ENCODE measurements at regions of chr11 and their contacts with region 1.

Region 1: DNA sequence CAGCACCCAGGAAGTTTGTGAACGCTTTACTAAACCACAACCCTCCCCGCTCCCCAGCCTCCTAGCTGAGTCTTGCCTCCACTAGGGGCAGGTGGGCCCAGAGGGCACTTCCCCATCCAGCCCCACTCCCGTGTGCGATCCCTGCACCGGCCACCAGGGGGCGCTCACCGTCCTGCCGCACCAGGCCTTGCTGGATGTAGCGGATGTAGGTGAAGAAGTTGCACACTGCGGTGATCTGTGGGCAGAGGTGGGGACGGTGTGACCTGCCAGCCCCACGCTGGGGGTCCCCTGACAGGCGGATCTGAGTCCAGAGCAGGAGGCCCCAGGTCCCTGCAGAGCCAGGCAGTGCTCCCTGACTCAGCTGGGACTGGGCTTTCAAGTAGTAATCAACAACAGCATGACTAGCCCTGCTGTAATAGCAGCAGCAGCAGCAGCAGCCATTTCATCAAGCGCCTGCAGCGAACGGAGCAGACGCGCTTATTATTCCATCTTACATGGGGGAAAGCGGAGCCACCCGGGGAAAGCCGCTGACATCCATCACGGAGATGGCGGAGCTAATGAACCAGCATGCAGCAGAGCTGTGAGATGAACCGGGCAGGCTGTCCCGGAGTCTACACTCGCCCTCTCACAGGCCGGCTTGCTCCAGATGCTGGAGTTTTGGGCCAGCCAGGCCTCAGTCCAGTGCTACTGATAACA is 7.9 kb upstream of the FADS3 start:
- DNase-seq: peak; percentile 82 to 97 (median 91)
- ATAC-seq: peak; percentile 89 to 92 (median 92)
- H3K4me3 ChIP-seq: no peak overlapping the region
- H3K4me3 Mint-ChIP-seq: no peak overlapping the region
- H3K27ac ChIP-seq: no peak overlapping the region
- H3K27ac Mint-ChIP-seq: peak overlapping the region; percentile 44 to 63
- H3K4me1 ChIP-seq: peaks cover 0 to 12% of the 10 kb centered on the region in 2 experiments
- H3K4me1 Mint-ChIP-seq: peaks cover 6 to 12% (median 8%) of the 10 kb centered on the region in 3 donors
- H3K27me3 ChIP-seq: peaks cover 0 to 9% of the 10 kb centered on the region in 2 experiments
- H3K27me3 Mint-ChIP-seq: peaks cover 0 to 3% of the 10 kb centered on the region in 2 donors

Region 2: GRCh38 chr11:61888590-61888989 is 10.7 kb before region 1 on chr11:
- CTCF ChIA-PET with region 1: interaction called in 1 of 2 experiments, 13 read pairs
- POLR2A ChIA-PET with region 1: no interaction called
- DNase-seq: no peak
- ATAC-seq: no peak
- H3K4me3 ChIP-seq: no peak overlapping the region
- H3K4me3 Mint-ChIP-seq: no peak overlapping the region
- H3K27ac ChIP-seq: no peak overlapping the region
- H3K27ac Mint-ChIP-seq: no peak overlapping the region
- H3K4me1 ChIP-seq: peaks cover 10 to 19% of the 10 kb centered on the region in 2 experiments
- H3K4me1 Mint-ChIP-seq: peaks cover 3 to 9% (median 5%) of the 10 kb centered on the region in 3 donors
- H3K27me3 ChIP-seq: peaks cover 0 to 11% of the 10 kb centered on the region in 2 experiments
- H3K27me3 Mint-ChIP-seq: no peaks in the 10 kb centered on the region

Region 3: DNA sequence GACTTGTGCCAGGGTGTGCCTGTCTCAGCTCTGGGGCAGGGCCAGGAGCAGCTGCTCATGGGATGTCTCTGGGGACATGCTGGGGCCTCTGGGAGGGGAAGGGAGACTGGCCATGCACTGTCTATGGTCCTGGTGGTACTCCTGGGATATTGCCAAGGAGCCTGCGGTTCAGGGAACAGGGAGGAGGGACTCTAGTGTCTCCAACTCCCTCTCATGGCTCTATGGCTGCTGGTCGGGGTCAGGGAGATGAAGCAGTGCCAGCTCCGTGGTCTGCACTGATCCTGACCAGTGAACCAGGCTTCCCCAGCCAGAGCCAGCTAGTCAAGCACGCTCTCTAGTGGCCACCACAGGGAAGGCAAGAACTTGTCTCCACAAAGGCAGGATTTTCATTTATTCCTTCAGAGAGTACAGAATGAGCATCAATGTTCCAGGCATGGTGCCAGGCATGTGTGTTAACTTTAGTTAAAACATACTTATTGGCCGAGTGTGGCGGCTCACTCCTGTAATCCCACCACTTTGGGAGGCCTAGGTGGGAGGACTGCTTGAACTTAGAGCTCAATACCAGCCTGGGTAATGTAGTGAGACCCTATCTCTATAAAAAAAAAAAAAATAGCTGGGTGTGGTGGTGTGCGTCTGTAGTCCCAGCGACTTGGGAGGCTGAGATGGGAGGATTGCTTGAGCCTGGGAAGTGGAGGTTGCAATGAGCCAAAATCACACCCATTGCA is 48.4 kb after region 1 on chr11:
- CTCF ChIA-PET with region 1: interaction called, 7 to 18 read pairs
- POLR2A ChIA-PET with region 1: no interaction called
- DNase-seq: peak in 32 of 35 experiments; percentile 25 to 78 (median 58)
- ATAC-seq: peak; percentile 45 to 76 (median 67)
- H3K4me3 ChIP-seq: no peak overlapping the region
- H3K4me3 Mint-ChIP-seq: no peak overlapping the region
- H3K27ac ChIP-seq: no peak overlapping the region
- H3K27ac Mint-ChIP-seq: no peak overlapping the region
- H3K4me1 ChIP-seq: peaks cover 0 to 6% of the 10 kb centered on the region in 2 experiments
- H3K4me1 Mint-ChIP-seq: no peaks in the 10 kb centered on the region
- H3K27me3 ChIP-seq: peaks cover 0 to 41% of the 10 kb centered on the region in 2 experiments
- H3K27me3 Mint-ChIP-seq: peaks cover 0 to 4% of the 10 kb centered on the region in 2 donors